Activated CD4-positive, alpha-beta memory T cell treated with anti-CD3 and anti-CD28 coated beads for 36 hours (primary cell): ENCODE measurements at regions of chr19 and their contacts with region 1.

Region 1: GRCh38 chr19:16118489-16119033 is 6.9 kb downstream of the RAB8A start:
- DNase-seq: peak; percentile 84
- H3K4me3 Mint-ChIP-seq: peak overlapping the region; percentile 55
- H3K27ac Mint-ChIP-seq: peak overlapping the region; percentile 97
- H3K4me1 Mint-ChIP-seq: peaks cover 79% of the 10 kb centered on the region
- H3K27me3 Mint-ChIP-seq: no peaks in the 10 kb centered on the region

Region 2: GRCh38 chr19:16025108-16026101 is 93.2 kb before region 1 on chr19:
- CTCF ChIA-PET with region 1: no interaction called
- POLR2A ChIA-PET with region 1: no interaction called
- intact Hi-C with region 1: no loop called
- DNase-seq: no peak
- H3K4me3 Mint-ChIP-seq: no peak overlapping the region
- H3K27ac Mint-ChIP-seq: no peak overlapping the region
- H3K4me1 Mint-ChIP-seq: peaks cover 9% of the 10 kb centered on the region
- H3K27me3 Mint-ChIP-seq: no peaks in the 10 kb centered on the region

Region 3: GRCh38 chr19:16070366-16070990 is 48.1 kb before region 1 on chr19:
- CTCF ChIA-PET with region 1: interaction called, 5 read pairs
- POLR2A ChIA-PET with region 1: interaction called, 3 read pairs
- intact Hi-C with region 1: loop called (anchors 2 kb)
- DNase-seq: peak; percentile 94
- H3K4me3 Mint-ChIP-seq: no peak overlapping the region
- H3K27ac Mint-ChIP-seq: no peak overlapping the region
- H3K4me1 Mint-ChIP-seq: peaks cover 43% of the 10 kb centered on the region
- H3K27me3 Mint-ChIP-seq: no peaks in the 10 kb centered on the region

Region 4: DNA sequence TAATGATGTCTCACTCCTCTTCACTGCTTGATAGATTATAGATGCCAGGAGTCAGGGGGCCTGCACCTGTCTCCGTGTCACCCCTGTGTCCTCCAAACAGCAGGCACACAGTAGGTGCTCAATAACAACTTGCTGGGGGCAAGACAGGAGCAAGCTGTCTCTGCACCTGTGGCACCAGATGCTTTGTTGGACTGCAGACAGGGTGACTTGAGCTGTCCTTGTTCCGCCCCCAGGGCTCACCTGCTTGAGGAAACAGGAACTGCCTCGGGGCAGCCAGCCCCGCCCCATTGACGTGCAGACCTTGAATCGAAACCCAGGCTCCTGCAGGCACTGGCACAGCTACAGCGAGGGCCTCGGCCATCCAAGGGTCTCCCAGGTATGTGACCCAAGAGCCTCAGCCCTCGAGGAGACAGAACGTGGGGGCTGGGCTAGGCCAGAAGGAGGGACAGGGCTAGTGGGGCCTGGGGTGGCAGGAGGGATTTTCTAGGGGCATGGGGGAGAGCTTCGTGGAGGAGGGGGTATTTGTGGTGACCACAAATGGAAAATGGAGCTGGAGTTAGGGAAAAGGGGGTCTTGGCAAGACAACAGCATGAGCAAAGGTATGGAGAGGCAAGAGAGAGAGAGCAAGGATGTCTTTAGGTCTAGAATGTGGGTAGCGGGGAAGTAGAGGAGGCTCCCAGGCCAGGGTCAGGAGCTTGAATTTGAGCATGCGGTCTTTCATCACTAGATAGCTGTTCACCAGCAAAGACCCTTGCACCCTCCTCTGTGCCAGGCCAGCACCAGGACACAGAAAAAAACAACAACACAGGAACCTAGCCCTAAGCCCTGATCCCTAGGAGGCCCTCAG is 25.1 kb after region 1 on chr19 and contains the start of gene HSH2D:
- CTCF ChIA-PET with region 1: interaction called, 3 read pairs
- POLR2A ChIA-PET with region 1: interaction called, 8 read pairs
- intact Hi-C with region 1: loop called (anchors 2 kb)
- DNase-seq: peak; percentile 90
- H3K4me3 Mint-ChIP-seq: peak within 1 kb of the TSS; percentile 92
- H3K27ac Mint-ChIP-seq: peak within 1 kb of the TSS; percentile 92
- H3K4me1 Mint-ChIP-seq: peaks cover 26% of the 10 kb centered on the region
- H3K27me3 Mint-ChIP-seq: no peaks in the 10 kb centered on the region
- total RNA-seq, gene HSH2D: 23.6 to 26.1 TPM

Region 5: GRCh38 chr19:16160943-16161560 is 42.5 kb after region 1 on chr19:
- CTCF ChIA-PET with region 1: no interaction called
- POLR2A ChIA-PET with region 1: no interaction called
- intact Hi-C with region 1: loop called (anchors 5 kb)
- DNase-seq: peak; percentile 67
- H3K4me3 Mint-ChIP-seq: no peak overlapping the region
- H3K27ac Mint-ChIP-seq: peak overlapping the region; percentile 70
- H3K4me1 Mint-ChIP-seq: peaks cover 18% of the 10 kb centered on the region
- H3K27me3 Mint-ChIP-seq: no peaks in the 10 kb centered on the region